ENCODE measurements at regions of chr13 and their contacts with region 1.

Region 1: DNA sequence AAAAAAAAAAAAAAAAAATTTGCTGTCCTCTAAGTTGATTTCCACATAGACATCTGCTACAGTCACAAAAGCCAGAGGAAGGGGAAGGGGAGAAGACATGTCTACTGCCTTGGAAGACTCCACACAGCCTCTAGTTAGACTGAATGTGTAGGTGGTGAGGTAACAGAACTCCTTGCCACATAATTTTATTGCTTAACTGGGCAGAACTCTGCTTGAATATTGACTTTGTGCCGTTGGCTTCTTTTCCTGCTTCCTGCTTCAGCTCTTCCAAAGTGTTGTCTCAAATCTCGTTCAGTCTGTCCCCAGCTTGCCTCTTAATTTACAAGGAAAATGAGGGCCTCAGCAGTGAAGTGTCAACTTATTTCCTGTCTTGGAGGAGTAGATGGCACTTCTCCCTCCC is 37.1 kb downstream of the ESD start:
- DNase-seq: no peak
- CTCF ChIP-seq: no peak

Region 2: GRCh38 chr13:46775385-46776107 is 15.7 kb after region 1 on chr13:
- CTCF ChIA-PET with region 1: interaction called, 19 read pairs
- POLR2A ChIA-PET with region 1: no interaction called
- DNase-seq: no peak
- CTCF ChIP-seq: no peak

Measured in GM10248 (cell line).